HepG2 (cell line): ENCODE measurements at regions of chr17 and their contacts with region 1.

Region 1: DNA sequence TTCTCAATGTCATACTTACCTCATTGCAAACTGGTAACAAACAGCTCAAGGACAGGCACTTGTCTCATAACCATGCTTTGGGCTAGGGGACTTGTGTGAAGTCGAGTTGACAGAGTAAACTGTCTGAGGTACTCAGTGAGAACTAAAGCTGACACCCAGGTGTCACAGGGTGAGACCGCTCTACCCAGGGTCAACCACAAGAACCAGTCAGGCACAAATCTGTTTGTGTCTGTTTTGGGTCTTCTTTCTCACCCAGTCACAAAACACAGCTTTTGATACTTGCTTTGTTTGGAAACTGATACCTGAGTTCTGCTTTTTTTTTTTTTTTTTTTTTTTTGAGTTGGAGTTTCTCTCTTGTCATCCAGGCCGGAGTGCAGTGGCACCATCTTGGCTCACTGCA is 161.1 kb downstream of the STX8 start:
- DNase-seq: no peak
- ATAC-seq: no peak
- H3K4me3 ChIP-seq: no peak overlapping the region
- H3K27ac ChIP-seq: no peak overlapping the region
- H3K4me1 ChIP-seq: no peaks in the 10 kb centered on the region
- H3K27me3 ChIP-seq: no peaks in the 10 kb centered on the region
- CTCF ChIP-seq: no peak
- EP300 ChIP-seq: no peak
- POLR2A ChIP-seq: no peak
- RAD21 ChIP-seq: no peak

Region 2: DNA sequence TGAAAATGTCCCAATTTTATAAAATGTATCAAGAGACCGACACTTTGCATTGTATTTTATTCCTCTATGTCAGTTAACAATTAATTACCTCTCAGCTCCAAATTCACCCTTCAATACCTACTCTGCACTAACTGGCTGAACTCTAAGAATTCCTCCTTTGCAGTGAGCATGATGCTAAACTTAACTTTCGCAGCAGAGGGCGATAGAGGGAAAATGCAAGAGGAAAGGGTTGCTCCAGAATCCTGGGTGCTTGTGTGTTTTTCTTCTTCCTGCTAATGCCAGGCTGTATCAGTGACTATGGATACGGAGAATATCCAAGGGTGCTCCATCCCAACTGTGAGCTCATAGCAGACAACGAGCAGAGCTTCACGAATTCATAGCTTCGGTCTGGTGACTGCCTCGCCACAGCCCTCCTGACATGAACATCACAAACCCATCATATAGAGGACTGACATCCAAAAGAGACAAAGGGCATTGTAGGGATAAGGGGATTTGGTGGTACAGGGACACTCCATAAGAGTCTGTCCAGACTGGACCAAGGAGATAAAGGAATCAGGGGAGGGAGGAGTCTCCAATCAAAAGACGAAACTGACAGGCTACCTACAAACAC is 11.8 kb before region 1 on chr17:
- CTCF ChIA-PET with region 1: no interaction called
- POLR2A ChIA-PET with region 1: no interaction called
- in situ Hi-C with region 1: no loop called
- intact Hi-C with region 1: no loop called
- DNase-seq: peak; percentile 45
- ATAC-seq: peak; percentile 61; the same call in 2 of the 3 replicates
- H3K4me3 ChIP-seq: no peak overlapping the region
- H3K27ac ChIP-seq: no peak overlapping the region
- H3K4me1 ChIP-seq: no peaks in the 10 kb centered on the region
- H3K27me3 ChIP-seq: no peaks in the 10 kb centered on the region
- CTCF ChIP-seq: peak; percentile 69
- EP300 ChIP-seq: no peak
- POLR2A ChIP-seq: no peak
- RAD21 ChIP-seq: peak; percentile 28; the same call in 1 of the 2 replicates

Region 3: GRCh38 chr17:9470171-9470570 is 55.7 kb after region 1 on chr17:
- CTCF ChIA-PET with region 1: no interaction called
- POLR2A ChIA-PET with region 1: no interaction called
- in situ Hi-C with region 1: loop called (anchors 10 kb)
- intact Hi-C with region 1: no loop called
- DNase-seq: no peak
- ATAC-seq: no peak
- H3K4me3 ChIP-seq: no peak overlapping the region
- H3K27ac ChIP-seq: no peak overlapping the region
- H3K4me1 ChIP-seq: peaks cover 17% of the 10 kb centered on the region
- H3K27me3 ChIP-seq: no peaks in the 10 kb centered on the region
- CTCF ChIP-seq: no peak
- EP300 ChIP-seq: no peak
- POLR2A ChIP-seq: no peak
- RAD21 ChIP-seq: no peak